Activated CD8-positive, alpha-beta T cell treated with anti-CD3 and anti-CD28 coated beads for 36 hours (primary cell): ENCODE measurements at regions of chr7 and their contacts with region 1.

Region 1: DNA sequence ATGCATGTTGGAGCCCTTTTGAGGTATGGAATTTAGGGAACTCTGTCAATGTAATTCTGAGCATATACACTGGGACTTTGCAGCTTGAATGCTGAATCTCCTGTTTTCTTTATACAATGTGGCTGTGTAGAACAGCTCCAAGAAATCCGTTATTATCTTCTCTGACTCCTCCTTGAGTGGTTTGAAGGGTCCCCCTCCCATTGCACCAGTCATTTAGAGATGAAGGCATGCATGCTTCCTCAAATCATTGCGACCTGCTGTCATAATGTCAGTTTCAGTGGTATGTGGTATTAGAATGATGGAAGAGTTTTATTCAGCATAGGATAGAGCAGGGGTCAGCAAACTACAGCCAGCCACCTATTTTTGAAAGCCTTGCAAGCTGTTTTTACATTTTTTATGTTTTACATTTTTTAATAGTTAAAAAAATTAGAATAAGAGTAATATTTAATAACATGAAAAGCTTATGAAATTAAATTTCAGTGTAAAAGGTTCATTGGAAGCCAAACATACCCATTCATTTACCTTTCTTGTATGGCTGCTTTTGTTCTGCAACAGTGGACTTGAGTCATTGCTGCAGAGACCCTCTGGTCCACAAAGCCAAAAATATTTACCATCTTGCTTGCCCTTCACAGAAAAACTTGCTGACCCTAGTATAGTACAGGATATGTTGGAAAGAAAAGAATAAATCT is 8.1 kb downstream of the STK17A start:
- DNase-seq: peak; percentile 77
- ATAC-seq: peak; percentile 56
- H3K4me3 Mint-ChIP-seq: peak overlapping the region; percentile 46
- H3K27ac Mint-ChIP-seq: peak overlapping the region; percentile 86
- H3K4me1 Mint-ChIP-seq: peaks cover 80% of the 10 kb centered on the region
- H3K27me3 Mint-ChIP-seq: no peaks in the 10 kb centered on the region
- CTCF ChIP-seq: no peak

Region 2: GRCh38 chr7:43604251-43604650 is 13.2 kb after region 1 on chr7:
- CTCF ChIA-PET with region 1: interaction called, 11 read pairs
- POLR2A ChIA-PET with region 1: interaction called, 9 read pairs
- intact Hi-C with region 1: no loop called
- DNase-seq: no peak
- ATAC-seq: no peak
- H3K4me3 Mint-ChIP-seq: no peak overlapping the region
- H3K27ac Mint-ChIP-seq: peak overlapping the region; percentile 91
- H3K4me1 Mint-ChIP-seq: peaks cover 48% of the 10 kb centered on the region
- H3K27me3 Mint-ChIP-seq: no peaks in the 10 kb centered on the region
- CTCF ChIP-seq: no peak

Region 3: DNA sequence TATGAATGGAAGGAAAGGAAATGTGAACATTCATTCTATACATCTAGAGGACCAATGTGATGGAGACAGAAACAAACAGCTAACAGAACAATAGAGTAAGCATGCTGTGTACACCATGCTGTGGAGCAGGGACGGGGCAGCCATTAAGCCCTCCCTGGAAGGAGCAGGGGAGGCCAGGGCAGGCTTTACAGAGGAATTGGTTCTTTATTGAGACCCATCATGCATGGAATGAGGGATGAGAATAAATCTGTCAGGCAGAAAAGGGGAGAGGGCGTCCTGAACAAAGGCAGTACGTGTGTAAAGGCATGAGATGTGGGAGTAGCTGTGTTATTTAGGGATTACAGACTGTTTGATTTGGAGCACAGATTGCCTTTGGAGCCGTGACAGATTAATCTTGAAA is 27.1 kb after region 1 on chr7:
- CTCF ChIA-PET with region 1: interaction called, 123 read pairs
- POLR2A ChIA-PET with region 1: interaction called, 10 read pairs
- intact Hi-C with region 1: loop called (anchors 5 kb)
- DNase-seq: no peak
- ATAC-seq: no peak
- H3K4me3 Mint-ChIP-seq: no peak overlapping the region
- H3K27ac Mint-ChIP-seq: no peak overlapping the region
- H3K4me1 Mint-ChIP-seq: peaks cover 51% of the 10 kb centered on the region
- H3K27me3 Mint-ChIP-seq: no peaks in the 10 kb centered on the region
- CTCF ChIP-seq: no peak

Region 4: GRCh38 chr7:44103923-44104859 is 513.2 kb after region 1 on chr7 and contains the start of gene AEBP1:
- CTCF ChIA-PET with region 1: no interaction called
- POLR2A ChIA-PET with region 1: no interaction called
- intact Hi-C with region 1: no loop called
- DNase-seq: peak; percentile 54
- ATAC-seq: peak; percentile 67
- H3K4me3 Mint-ChIP-seq: peak within 1 kb of the TSS; percentile 81
- H3K27ac Mint-ChIP-seq: peak within 1 kb of the TSS; percentile 56
- H3K4me1 Mint-ChIP-seq: peaks cover 19% of the 10 kb centered on the region
- H3K27me3 Mint-ChIP-seq: peaks cover 2% of the 10 kb centered on the region
- CTCF ChIP-seq: no peak
- total RNA-seq, gene AEBP1: 29.1 to 30.4 TPM